Activated CD8-positive, alpha-beta T cell treated with anti-CD3 and anti-CD28 coated beads for 36 hours (primary cell): ENCODE measurements at regions of chr6 and their contacts with region 1.

Region 1: GRCh38 chr6:110039364-110039980 is 61.4 kb downstream of the GPR6 start:
- DNase-seq: peak; percentile 93
- ATAC-seq: peak; percentile 85
- H3K4me3 Mint-ChIP-seq: peak overlapping the region; percentile 78
- H3K27ac Mint-ChIP-seq: peak overlapping the region; percentile 96
- H3K4me1 Mint-ChIP-seq: peaks cover 19% of the 10 kb centered on the region
- H3K27me3 Mint-ChIP-seq: no peaks in the 10 kb centered on the region
- CTCF ChIP-seq: peak; percentile 55

Region 2: DNA sequence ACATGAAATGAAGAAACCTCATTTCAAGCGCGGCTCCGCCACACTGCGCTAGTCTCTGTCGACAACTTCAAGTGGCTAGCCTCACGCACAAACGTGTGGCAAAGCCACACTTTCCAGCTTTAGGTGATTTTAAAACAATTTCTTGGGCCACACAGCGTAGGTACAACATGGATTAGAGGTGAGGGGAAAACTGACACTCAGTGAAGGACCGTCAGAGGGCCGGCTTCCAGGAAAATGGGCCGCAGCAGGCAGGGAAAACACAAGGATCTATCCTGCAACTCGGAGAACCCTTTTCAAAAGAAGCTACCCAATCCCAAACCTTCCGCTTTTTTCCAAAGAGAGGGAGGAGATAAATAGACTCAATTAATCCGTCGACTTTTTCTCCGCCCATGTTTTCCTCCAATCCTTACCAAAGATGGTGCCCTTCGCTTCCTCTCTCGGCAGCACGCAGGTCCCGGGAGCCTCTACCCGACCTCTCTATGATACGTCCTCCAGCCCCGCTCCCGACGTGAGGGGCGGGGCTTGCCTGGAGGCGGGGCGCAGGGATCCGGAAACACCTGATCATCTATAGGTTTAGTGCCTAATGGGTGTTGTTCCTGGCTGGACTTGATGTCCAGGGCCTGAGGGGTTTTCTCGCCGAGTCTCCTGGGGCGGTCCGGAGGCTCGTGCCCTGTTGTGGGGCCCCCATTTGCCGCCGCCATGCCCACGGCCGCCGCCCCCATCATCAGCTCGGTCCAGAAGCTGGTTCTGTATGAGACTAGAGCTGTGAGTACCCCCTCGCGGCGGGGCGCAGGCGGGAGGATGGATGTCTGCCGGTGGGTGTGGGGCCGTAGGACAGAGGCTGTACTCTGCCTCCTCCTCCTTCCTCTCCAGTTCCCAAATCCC is 348.5 kb before region 1 on chr6 and contains the starts of genes AK9 and FIG4:
- CTCF ChIA-PET with region 1: interaction called, 28 read pairs
- POLR2A ChIA-PET with region 1: interaction called, 4 read pairs
- intact Hi-C with region 1: no loop called
- DNase-seq: peak; percentile 95
- ATAC-seq: peak; percentile 95
- H3K4me3 Mint-ChIP-seq: peak within 1 kb of the TSS; percentile 91
- H3K27ac Mint-ChIP-seq: peak within 1 kb of the TSS; percentile 90
- H3K4me1 Mint-ChIP-seq: peaks cover 40% of the 10 kb centered on the region
- H3K27me3 Mint-ChIP-seq: no peaks in the 10 kb centered on the region
- CTCF ChIP-seq: no peak
- total RNA-seq, gene AK9: 3.0 to 3.5 TPM
- total RNA-seq, gene FIG4: 13.1 to 14.3 TPM

Region 3: GRCh38 chr6:109720311-109720710 is 319.2 kb before region 1 on chr6:
- CTCF ChIA-PET with region 1: interaction called, 20 read pairs
- POLR2A ChIA-PET with region 1: no interaction called
- intact Hi-C with region 1: no loop called
- DNase-seq: no peak
- ATAC-seq: no peak
- H3K4me3 Mint-ChIP-seq: no peak overlapping the region
- H3K27ac Mint-ChIP-seq: no peak overlapping the region
- H3K4me1 Mint-ChIP-seq: no peaks in the 10 kb centered on the region
- H3K27me3 Mint-ChIP-seq: no peaks in the 10 kb centered on the region
- CTCF ChIP-seq: no peak

Region 4: DNA sequence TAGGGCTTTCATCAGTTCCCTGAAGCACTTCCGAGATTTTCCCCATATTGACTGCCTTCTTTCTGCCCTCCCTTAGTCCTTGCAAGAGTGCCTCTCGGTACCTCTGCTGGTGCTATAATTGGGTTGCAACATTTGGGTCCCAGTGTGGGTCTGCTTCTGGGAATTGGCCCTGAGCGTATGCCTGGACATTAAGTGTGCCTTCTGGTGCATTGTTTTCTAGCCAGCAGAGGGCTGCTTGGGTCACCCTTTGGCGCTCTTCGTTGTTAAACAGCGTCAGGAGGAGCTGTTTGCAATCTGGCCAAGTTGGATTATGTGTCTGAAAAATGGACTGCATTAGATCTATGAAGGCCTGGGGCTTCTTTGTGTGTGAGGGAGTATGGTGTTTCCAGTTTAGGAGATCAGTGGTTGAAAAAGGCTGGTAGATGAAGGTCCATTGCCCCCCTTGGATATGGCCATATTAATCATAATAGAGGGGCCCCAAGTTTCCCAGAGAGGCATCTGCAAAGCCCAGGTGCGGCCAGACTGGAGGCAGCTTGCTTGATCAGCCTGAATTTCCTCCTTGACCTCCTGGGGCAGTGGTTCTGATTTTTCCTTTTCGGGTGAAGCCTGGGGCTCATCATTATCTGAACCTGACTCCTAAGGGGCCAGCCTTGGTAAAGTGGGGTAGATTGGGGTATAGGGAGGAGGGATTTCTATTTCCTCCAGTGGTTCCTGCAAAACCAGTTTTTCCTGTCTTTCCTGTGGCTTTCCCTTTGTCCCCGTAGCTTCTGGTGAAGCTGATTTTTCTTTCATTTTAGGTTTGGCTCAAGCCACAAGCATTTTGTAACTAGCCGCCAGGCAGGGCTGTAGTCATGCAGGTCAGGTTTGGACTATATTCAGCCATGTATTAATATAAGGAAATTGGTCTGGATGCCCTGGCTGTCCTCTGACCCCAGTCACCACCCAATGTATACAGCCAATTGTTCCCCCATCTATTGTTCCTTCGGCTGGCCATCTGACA is 146.7 kb before region 1 on chr6:
- CTCF ChIA-PET with region 1: no interaction called
- POLR2A ChIA-PET with region 1: no interaction called
- intact Hi-C with region 1: no loop called
- DNase-seq: no peak
- ATAC-seq: no peak
- H3K4me3 Mint-ChIP-seq: no peak overlapping the region
- H3K27ac Mint-ChIP-seq: no peak overlapping the region
- H3K4me1 Mint-ChIP-seq: no peaks in the 10 kb centered on the region
- H3K27me3 Mint-ChIP-seq: peaks cover 8% of the 10 kb centered on the region
- CTCF ChIP-seq: no peak

Region 5: GRCh38 chr6:110013386-110013785 is 26.1 kb before region 1 on chr6:
- CTCF ChIA-PET with region 1: interaction called, 10 read pairs
- POLR2A ChIA-PET with region 1: interaction called, 3 read pairs
- intact Hi-C with region 1: no loop called
- DNase-seq: no peak
- ATAC-seq: no peak
- H3K4me3 Mint-ChIP-seq: no peak overlapping the region
- H3K27ac Mint-ChIP-seq: no peak overlapping the region
- H3K4me1 Mint-ChIP-seq: no peaks in the 10 kb centered on the region
- H3K27me3 Mint-ChIP-seq: no peaks in the 10 kb centered on the region
- CTCF ChIP-seq: no peak

Region 6: GRCh38 chr6:110053395-110054240 is 14.1 kb after region 1 on chr6:
- CTCF ChIA-PET with region 1: interaction called, 35 read pairs
- POLR2A ChIA-PET with region 1: interaction called, 3 read pairs
- intact Hi-C with region 1: no loop called
- DNase-seq: no peak
- ATAC-seq: no peak
- H3K4me3 Mint-ChIP-seq: no peak overlapping the region
- H3K27ac Mint-ChIP-seq: no peak overlapping the region
- H3K4me1 Mint-ChIP-seq: no peaks in the 10 kb centered on the region
- H3K27me3 Mint-ChIP-seq: peaks cover 3% of the 10 kb centered on the region
- CTCF ChIP-seq: peak; percentile 74

Region 7: GRCh38 chr6:110404607-110405006 is 365.1 kb after region 1 on chr6:
- CTCF ChIA-PET with region 1: interaction called, 10 read pairs
- POLR2A ChIA-PET with region 1: no interaction called
- intact Hi-C with region 1: no loop called
- DNase-seq: no peak
- ATAC-seq: no peak
- H3K4me3 Mint-ChIP-seq: no peak overlapping the region
- H3K27ac Mint-ChIP-seq: no peak overlapping the region
- H3K4me1 Mint-ChIP-seq: no peaks in the 10 kb centered on the region
- H3K27me3 Mint-ChIP-seq: peaks cover 2% of the 10 kb centered on the region
- CTCF ChIP-seq: no peak